Adrenal gland (tissue), 19 donors: ENCODE measurements at regions of chr7 and their contacts with region 1.

Region 1: DNA sequence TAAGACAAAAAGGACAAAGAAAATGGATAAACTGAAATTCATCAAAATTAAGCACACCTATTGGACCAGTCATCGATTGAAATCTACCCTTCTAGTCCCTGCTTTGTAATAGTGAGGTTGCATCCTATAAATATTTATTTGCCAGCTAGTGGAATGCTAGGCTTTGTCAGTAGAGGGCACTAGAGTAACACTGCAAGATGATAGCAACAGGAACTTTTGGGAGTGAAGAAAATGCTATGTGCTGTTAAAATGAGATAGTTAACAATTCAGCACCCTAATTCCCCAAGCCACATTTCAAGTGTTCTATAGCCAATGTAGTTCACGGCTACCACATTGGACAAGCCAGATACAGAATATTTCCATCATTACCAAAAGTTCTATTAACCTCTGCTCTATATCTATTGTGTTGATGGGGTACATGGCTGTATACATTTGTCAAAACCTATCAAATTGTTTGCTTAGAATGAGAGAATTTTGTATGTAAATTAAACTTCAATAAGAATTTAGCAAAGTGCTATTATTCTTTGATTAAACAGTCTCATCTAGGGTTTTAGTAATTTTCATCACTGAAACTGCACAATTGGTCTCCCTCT is 69.8 kb downstream of the LSMEM1 start:
- DNase-seq: peak in 5 of 7 donors; percentile 23 to 53 (median 31)
- H3K4me3 ChIP-seq: no peak overlapping the region
- H3K27ac ChIP-seq: no peak overlapping the region
- H3K4me1 ChIP-seq: no peaks in the 10 kb centered on the region
- H3K27me3 ChIP-seq: peaks cover 3% of the 10 kb centered on the region
- CTCF ChIP-seq: peak; percentile 71 to 96 (median 88)
- POLR2A ChIP-seq: no peak

Region 2: DNA sequence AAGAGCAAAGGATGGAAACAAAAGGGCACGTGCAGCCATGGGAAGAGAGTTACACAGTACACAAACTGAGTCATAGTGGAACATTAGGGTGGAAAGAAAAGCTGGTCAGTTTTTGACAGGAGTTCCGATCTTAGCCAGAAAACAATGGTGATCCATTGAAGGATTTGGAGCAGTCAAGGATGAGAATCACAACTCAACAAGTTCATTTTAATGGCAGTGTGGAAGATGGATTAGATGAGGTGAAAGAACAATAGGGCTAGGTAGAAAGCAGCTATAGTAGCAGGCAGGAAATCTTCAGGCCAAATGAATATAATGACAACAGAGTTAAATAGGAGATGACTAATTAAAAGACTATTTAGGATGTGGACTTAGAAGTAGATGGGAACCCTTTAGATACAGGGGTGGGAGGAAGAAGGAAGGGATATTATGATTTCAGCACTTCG is 480.7 kb before region 1 on chr7:
- intact Hi-C with region 1: no loop called
- DNase-seq: no peak
- H3K4me3 ChIP-seq: no peak overlapping the region
- H3K27ac ChIP-seq: no peak overlapping the region
- H3K4me1 ChIP-seq: no peaks in the 10 kb centered on the region
- H3K27me3 ChIP-seq: no peaks in the 10 kb centered on the region
- CTCF ChIP-seq: no peak
- POLR2A ChIP-seq: no peak

Region 3: DNA sequence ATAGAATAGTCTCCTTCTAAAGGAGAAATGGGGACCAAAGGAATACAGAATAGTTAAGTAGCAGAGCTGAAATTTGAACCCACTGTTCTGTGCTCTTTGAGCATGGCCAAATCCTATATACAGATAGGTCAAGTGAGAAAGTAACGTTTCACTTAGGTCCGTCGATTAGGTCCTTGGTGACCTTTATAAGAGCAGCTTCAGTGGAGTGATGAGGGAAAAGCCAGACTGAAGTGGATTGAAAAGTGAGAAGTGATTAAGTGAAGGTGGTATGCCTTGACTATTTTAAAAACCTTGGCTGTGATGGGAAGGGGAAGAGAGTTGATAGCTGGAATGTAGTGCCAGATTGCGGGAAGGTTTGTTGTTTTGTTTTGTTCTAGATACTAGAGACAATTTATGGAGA is 80.4 kb before region 1 on chr7:
- intact Hi-C with region 1: no loop called
- DNase-seq: no peak
- H3K4me3 ChIP-seq: no peak overlapping the region
- H3K27ac ChIP-seq: no peak overlapping the region
- H3K4me1 ChIP-seq: peaks cover 0 to 14% of the 10 kb centered on the region in 2 donors
- H3K27me3 ChIP-seq: no peaks in the 10 kb centered on the region
- CTCF ChIP-seq: no peak
- POLR2A ChIP-seq: no peak

Region 4: DNA sequence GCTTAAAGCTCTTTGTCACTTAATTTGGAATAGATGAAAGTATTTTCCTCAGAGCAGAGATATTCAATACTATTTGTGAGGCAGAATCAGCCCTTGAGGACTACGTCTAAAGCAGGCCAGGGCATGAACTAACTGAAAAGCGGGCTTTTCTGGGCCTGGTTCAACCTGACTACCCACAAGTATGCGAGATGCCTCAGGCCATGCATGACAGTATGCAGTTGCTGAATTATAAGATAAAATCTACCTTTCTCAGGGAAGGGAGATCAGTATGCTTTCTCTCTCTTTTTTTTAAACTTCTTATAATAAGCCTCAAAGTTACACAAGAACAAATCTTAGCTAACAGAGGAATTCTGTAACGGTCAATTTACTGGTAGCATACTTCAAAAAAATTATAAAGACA is 219.5 kb after region 1 on chr7:
- intact Hi-C with region 1: no loop called
- DNase-seq: no peak
- H3K4me3 ChIP-seq: no peak overlapping the region
- H3K27ac ChIP-seq: no peak overlapping the region
- H3K4me1 ChIP-seq: no peaks in the 10 kb centered on the region
- H3K27me3 ChIP-seq: no peaks in the 10 kb centered on the region
- CTCF ChIP-seq: no peak
- POLR2A ChIP-seq: no peak

Region 5: GRCh38 chr7:112882991-112883390 is 332.4 kb after region 1 on chr7:
- intact Hi-C with region 1: loop called in 1 of 2 experiments (anchors 10 kb)
- DNase-seq: no peak
- H3K4me3 ChIP-seq: no peak overlapping the region
- H3K27ac ChIP-seq: no peak overlapping the region
- H3K4me1 ChIP-seq: peaks cover 4 to 5% of the 10 kb centered on the region in 2 donors
- H3K27me3 ChIP-seq: no peaks in the 10 kb centered on the region
- CTCF ChIP-seq: no peak
- POLR2A ChIP-seq: no peak

Region 6: GRCh38 chr7:112946350-112946749 is 395.8 kb after region 1 on chr7:
- intact Hi-C with region 1: no loop called
- DNase-seq: no peak
- H3K4me3 ChIP-seq: no peak overlapping the region
- H3K27ac ChIP-seq: no peak overlapping the region
- H3K4me1 ChIP-seq: no peaks in the 10 kb centered on the region
- H3K27me3 ChIP-seq: no peaks in the 10 kb centered on the region
- CTCF ChIP-seq: no peak
- POLR2A ChIP-seq: no peak